ENCODE measurements at regions of chr18 and their contacts with region 1.

Region 1: GRCh38 chr18:49967171-49967570 is 153.8 kb upstream of the ACAA2 start:
- DNase-seq: peak in 1 of 2 donors; percentile 40
- H3K4me3 ChIP-seq: no peak overlapping the region
- H3K27ac ChIP-seq: no peak overlapping the region
- H3K4me1 ChIP-seq: peaks cover 0 to 13% (median 5%) of the 10 kb centered on the region in 4 donors
- H3K27me3 ChIP-seq: no peaks in the 10 kb centered on the region
- CTCF ChIP-seq: no peak
- EP300 ChIP-seq: no peak
- POLR2A ChIP-seq: no peak

Region 2: DNA sequence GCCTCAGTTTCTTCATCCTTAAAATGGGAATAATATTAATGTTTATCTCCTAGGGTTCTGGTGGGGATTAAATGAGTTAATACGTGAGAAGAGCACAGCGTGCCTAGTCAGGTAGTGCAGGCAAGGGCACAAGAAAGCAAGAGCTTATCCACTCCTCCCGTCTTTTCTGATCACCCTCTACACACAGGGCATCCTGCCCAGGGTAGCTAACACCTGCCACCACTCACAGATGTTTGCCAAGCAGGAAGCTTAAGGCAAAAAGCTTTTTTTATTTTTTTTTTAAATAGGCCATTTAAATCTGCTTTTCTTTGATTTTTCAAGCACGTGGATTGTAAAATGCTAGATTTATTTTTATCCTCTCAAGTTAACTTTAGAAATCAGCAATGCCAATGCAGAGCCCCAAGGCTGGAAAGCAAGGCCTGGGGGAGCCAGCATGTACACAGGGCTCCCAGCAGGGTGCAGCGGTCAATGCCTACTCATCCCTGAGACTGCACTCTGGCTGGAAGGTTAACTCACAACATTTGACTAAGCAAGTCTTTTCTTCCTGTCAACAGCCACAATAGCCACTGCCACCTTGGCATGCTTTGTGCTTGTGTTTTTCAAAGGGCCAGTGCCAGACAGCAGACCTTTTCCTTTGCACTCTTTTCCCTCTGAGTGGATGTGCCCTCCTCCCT is 67.4 kb before region 1 on chr18:
- intact Hi-C with region 1: loop called (anchors 10 kb)
- DNase-seq: peak in 1 of 2 donors; percentile 9
- H3K4me3 ChIP-seq: no peak overlapping the region
- H3K27ac ChIP-seq: no peak overlapping the region
- H3K4me1 ChIP-seq: peaks cover 0 to 8% (median 2%) of the 10 kb centered on the region in 4 donors
- H3K27me3 ChIP-seq: no peaks in the 10 kb centered on the region
- CTCF ChIP-seq: no peak
- EP300 ChIP-seq: no peak
- POLR2A ChIP-seq: no peak

Region 3: GRCh38 chr18:50194631-50195532 is 227.7 kb after region 1 on chr18 and contains the start of gene MYO5B:
- intact Hi-C with region 1: no loop called
- DNase-seq: peak; percentile 91 to 95
- H3K4me3 ChIP-seq: peak within 1 kb of the TSS; percentile 60 to 69 (median 62)
- H3K27ac ChIP-seq: peak within 1 kb of the TSS; percentile 78 to 89 (median 81)
- H3K4me1 ChIP-seq: peaks cover 13 to 29% (median 26%) of the 10 kb centered on the region in 4 donors
- H3K27me3 ChIP-seq: peaks cover 0 to 79% (median 20%) of the 10 kb centered on the region in 3 donors
- CTCF ChIP-seq: peak in 3 of 7 experiments; percentile 8 to 83 (median 33)
- EP300 ChIP-seq: no peak
- POLR2A ChIP-seq: no peak
- total RNA-seq, gene MYO5B: 18.7 to 224 (median 54.5) TPM

Region 4: GRCh38 chr18:50266248-50266704 is 299.1 kb after region 1 on chr18 and contains the start of gene CFAP53:
- intact Hi-C with region 1: no loop called
- DNase-seq: peak; percentile 89 to 97
- H3K4me3 ChIP-seq: peak within 1 kb of the TSS; percentile 58 to 86 (median 68)
- H3K27ac ChIP-seq: peak within 1 kb of the TSS in 3 of 5 donors; percentile 41 to 83 (median 44)
- H3K4me1 ChIP-seq: peaks cover 0 to 28% (median 23%) of the 10 kb centered on the region in 4 donors
- H3K27me3 ChIP-seq: no peaks in the 10 kb centered on the region
- CTCF ChIP-seq: no peak
- EP300 ChIP-seq: no peak
- POLR2A ChIP-seq: no peak
- total RNA-seq, gene CFAP53: 4.1 TPM in 1 of 5 donors, not detected in the others

Measured in stomach (tissue), 19 donors.